OCI-LY7 (cell line): ENCODE measurements at regions of chr13 and their contacts with region 1.

Region 1: GRCh38 chr13:73967397-73968165 is 166.6 kb downstream of the KLF12 start:
- DNase-seq: peak; percentile 91
- H3K4me3 ChIP-seq: peak overlapping the region; percentile 61
- H3K27ac ChIP-seq: peak overlapping the region; percentile 99
- H3K4me1 ChIP-seq: peaks cover 76% of the 10 kb centered on the region
- CTCF ChIP-seq: no peak

Region 2: DNA sequence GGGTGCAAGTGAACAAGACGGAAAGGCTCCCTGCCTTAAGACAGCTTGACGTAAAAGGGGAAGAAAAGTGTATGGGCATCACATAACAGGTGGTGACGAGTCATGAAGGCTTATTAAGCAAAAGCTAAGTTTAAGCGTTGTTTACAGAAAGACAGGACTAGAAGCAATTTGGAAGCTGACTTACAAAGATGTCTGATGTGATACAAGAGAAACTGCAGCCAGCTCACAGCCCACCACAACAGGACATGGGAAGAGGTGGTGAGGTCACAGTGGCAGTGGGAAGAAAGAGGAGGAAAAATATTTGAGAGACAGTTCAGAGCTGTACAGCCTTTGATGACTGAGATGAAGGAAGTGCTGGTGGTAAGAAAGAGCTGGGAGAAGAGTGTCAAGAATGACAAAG is 14.9 kb before region 1 on chr13:
- CTCF ChIA-PET with region 1: no interaction called
- POLR2A ChIA-PET with region 1: interaction called, 10 read pairs
- intact Hi-C with region 1: no loop called
- DNase-seq: no peak
- H3K4me3 ChIP-seq: no peak overlapping the region
- H3K27ac ChIP-seq: peak overlapping the region; percentile 3
- H3K4me1 ChIP-seq: peaks cover 59% of the 10 kb centered on the region
- CTCF ChIP-seq: no peak

Region 3: DNA sequence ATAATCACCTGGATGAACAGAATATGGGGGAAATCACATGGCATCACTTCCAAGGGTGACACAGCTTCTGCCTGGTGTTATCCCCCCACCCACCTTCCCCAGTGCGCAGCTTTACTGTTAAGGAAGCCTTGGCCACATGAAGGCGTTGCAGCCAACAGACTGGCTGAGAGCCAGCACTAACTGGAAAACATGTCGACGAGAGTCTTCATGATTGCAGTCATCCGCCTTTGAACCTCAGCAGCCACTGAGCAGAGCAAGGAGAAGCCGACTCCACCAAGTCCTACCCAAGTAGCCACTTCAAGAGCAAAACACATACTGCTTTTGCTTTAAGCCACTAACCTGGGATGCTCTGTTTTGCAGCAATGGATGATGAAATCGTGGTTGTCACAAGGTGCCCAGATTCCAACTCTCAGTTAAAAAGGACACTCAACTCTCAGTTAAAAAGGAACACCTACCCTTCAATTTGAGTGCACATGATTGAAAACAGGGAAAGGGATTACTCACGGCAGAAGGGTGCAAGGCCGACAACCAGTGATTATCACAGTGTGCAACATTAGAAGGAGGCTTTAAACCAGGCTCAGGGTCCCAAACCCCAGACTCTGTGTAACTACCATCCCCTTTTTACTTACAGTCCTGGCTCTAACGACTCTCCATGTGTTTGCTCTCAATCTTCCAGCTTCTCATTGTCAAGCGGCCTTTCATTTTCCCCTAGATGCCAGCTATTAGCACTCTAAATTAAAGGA is 17.5 kb after region 1 on chr13:
- CTCF ChIA-PET with region 1: no interaction called
- POLR2A ChIA-PET with region 1: interaction called, 306 read pairs
- intact Hi-C with region 1: no loop called
- DNase-seq: no peak
- H3K4me3 ChIP-seq: no peak overlapping the region
- H3K27ac ChIP-seq: peak overlapping the region; percentile 51
- H3K4me1 ChIP-seq: peaks cover 84% of the 10 kb centered on the region
- CTCF ChIP-seq: peak; percentile 36; the same call in 1 of the 2 replicates

Region 4: DNA sequence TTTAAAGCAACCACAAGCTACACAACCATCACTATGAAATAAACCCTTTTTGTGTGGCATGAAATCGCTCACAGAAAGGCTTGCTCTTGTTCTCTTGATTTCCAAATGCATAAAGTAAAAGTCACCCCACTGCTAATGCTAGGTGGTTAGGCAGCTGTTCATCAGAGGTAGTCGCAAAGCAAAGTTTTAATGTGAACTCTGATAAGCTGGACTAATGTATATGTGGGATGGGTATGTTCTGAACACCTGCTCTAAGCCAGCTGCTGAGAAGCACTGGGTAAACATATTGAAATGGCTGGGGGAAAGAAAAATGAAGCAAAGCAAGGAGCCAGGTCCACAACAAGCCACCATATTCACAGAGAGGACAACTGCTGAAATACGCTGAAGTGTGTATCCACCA is 24.3 kb after region 1 on chr13:
- CTCF ChIA-PET with region 1: interaction called, 7 read pairs
- POLR2A ChIA-PET with region 1: interaction called, 306 read pairs
- intact Hi-C with region 1: loop called (anchors 1 kb)
- DNase-seq: peak; percentile 84
- H3K4me3 ChIP-seq: peak overlapping the region; percentile 56
- H3K27ac ChIP-seq: peak overlapping the region; percentile 99
- H3K4me1 ChIP-seq: peaks cover 98% of the 10 kb centered on the region
- CTCF ChIP-seq: no peak

Region 5: DNA sequence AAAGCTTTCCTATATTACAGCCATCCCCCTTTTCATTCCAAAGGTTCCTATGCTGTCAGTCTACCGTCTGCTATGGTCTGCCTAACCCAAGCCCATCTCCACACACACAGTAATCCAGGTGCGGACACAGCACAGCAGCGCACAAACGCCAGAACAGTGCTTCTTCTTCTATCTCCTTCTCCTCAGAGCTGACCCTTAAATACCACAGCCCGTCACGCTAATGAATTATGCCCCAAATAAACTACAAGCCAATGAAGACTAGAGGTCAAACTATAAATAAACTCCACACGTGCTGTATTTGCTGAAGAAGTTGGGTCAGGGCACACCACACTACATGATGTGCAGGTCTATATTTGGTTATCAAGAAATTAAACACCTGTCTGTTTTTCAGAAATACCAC is 1442.6 kb after region 1 on chr13:
- CTCF ChIA-PET with region 1: no interaction called
- POLR2A ChIA-PET with region 1: no interaction called
- intact Hi-C with region 1: loop called (anchors 5 kb)
- DNase-seq: peak; percentile 93
- H3K4me3 ChIP-seq: peak overlapping the region; percentile 50
- H3K27ac ChIP-seq: peak overlapping the region; percentile 91
- H3K4me1 ChIP-seq: peaks cover 82% of the 10 kb centered on the region
- CTCF ChIP-seq: no peak